ENCODE measurements at regions of chr7 and their contacts with region 1.

Region 1: GRCh38 chr7:33109005-33109757 is at the start of gene RP9:
- DNase-seq: peak; percentile 60
- H3K4me3 ChIP-seq: peak within 1 kb of the TSS; percentile 73 to 95 (median 85)
- H3K27ac ChIP-seq: peak within 1 kb of the TSS; percentile 66
- H3K4me1 ChIP-seq: peaks cover 18% of the 10 kb centered on the region
- H3K27me3 ChIP-seq: no peaks in the 10 kb centered on the region
- CTCF ChIP-seq: peak in 1 of 2 donors; percentile 49
- total RNA-seq, gene RP9: 7.2 to 17.1 TPM

Region 2: GRCh38 chr7:32694182-32694581 is 415.0 kb before region 1 on chr7:
- CTCF ChIA-PET with region 1: no interaction called
- dilution Hi-C with region 1: no loop called
- in situ Hi-C with region 1: no loop called
- intact Hi-C with region 1: loop called (anchors 10 kb)
- DNase-seq: no peak
- H3K4me3 ChIP-seq: no peak overlapping the region
- H3K27ac ChIP-seq: no peak overlapping the region
- H3K4me1 ChIP-seq: no peaks in the 10 kb centered on the region
- H3K27me3 ChIP-seq: no peaks in the 10 kb centered on the region
- CTCF ChIP-seq: no peak

Region 3: DNA sequence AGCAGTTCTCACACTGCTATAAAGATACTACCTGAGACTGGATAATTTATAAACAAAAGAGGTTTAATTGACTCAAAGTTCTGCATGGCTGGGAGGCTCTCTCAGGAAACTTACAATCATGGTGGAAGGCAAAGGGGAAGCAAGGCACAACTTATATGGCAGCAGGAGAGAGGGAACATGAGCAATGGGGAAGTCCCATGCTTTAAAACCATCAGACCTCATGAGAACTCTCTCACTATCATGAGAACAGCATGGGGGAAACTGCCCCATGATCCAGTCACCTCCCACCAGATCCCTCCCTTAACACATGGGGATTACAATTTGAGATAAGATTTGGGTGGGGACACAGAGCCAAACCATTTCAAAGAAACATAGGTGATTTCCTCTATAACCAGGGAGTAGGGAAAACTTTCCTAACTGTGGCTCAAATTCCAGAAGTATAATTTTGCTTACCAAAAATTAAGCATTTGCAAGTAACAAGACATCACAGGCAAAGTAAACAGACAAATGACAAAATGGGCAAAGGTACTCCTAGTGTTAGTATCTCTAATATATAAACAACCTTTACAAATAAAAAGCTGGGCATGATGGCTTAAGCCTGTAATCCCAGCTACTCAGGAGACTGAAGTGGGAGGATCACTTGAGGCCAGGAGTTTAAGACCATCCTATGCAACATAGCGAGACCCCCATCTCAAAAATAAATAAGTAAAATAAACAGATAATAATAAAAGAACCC is 305.6 kb before region 1 on chr7:
- CTCF ChIA-PET with region 1: interaction called, 5 read pairs
- dilution Hi-C with region 1: no loop called
- in situ Hi-C with region 1: no loop called
- intact Hi-C with region 1: loop called (anchors 1 kb)
- DNase-seq: no peak
- H3K4me3 ChIP-seq: no peak overlapping the region
- H3K27ac ChIP-seq: no peak overlapping the region
- H3K4me1 ChIP-seq: no peaks in the 10 kb centered on the region
- H3K27me3 ChIP-seq: no peaks in the 10 kb centered on the region
- CTCF ChIP-seq: no peak

Region 4: GRCh38 chr7:32942786-32943653 is 166.2 kb before region 1 on chr7:
- CTCF ChIA-PET with region 1: no interaction called
- dilution Hi-C with region 1: no loop called
- in situ Hi-C with region 1: no loop called
- intact Hi-C with region 1: loop called (anchors 5 kb)
- DNase-seq: peak; percentile 74
- H3K4me3 ChIP-seq: peak overlapping the region; percentile 60 to 69 (median 64)
- H3K27ac ChIP-seq: peak overlapping the region; percentile 67
- H3K4me1 ChIP-seq: peaks cover 3% of the 10 kb centered on the region
- H3K27me3 ChIP-seq: no peaks in the 10 kb centered on the region
- CTCF ChIP-seq: peak; percentile 20 to 63

Region 5: GRCh38 chr7:33062782-33063443 is 46.3 kb before region 1 on chr7:
- CTCF ChIA-PET with region 1: no interaction called
- dilution Hi-C with region 1: no loop called
- in situ Hi-C with region 1: no loop called
- intact Hi-C with region 1: loop called (anchors 2 kb)
- DNase-seq: peak; percentile 94
- H3K4me3 ChIP-seq: peak overlapping the region; percentile 62 to 95 (median 84)
- H3K27ac ChIP-seq: peak overlapping the region; percentile 73
- H3K4me1 ChIP-seq: peaks cover 5% of the 10 kb centered on the region
- H3K27me3 ChIP-seq: no peaks in the 10 kb centered on the region
- CTCF ChIP-seq: no peak

Region 6: DNA sequence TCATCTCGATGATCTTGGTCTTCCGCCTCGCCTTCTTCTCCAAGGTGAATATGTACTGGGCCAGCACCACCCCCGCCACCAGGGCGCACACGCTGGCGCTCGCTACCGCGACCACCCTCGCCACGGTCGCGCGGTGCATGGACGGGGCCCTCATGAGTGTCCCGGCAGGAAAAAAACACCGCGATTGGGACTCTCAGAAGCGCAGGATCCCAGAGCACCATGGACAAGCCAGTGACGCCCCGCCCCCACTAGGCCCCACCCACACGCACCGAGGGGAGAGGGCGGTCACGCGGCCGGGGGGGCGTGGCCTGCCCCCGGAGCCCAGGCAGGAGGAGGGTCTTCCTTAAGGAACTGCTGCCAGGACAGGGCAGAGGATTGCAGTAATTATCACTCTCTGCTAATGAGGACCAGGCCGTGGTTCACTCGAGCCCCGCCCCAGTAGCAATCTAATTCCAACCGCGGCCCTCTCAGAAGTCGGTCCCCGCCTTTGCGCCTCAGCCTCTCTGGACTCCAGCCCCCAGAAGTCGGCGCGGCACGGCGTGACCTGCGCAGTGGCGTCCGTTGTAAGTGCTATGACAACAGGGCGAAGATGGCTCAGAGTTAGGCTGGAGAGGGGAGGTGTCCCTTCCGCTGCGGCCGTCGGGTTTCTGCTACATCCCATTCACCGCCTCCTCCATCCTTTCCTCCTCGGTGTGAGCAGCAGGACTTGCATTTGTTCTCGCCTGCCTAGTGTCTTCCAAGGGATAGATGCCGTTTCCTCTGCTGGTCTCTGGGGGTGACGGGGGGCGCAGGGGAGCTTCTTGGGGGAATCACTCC is 20.0 kb after region 1 on chr7 and contains the start of gene BBS9:
- CTCF ChIA-PET with region 1: no interaction called
- dilution Hi-C with region 1: no loop called
- in situ Hi-C with region 1: no loop called
- intact Hi-C with region 1: loop called (anchors 1 kb)
- DNase-seq: peak; percentile 95
- H3K4me3 ChIP-seq: peak within 1 kb of the TSS; percentile 56 to 84 (median 80)
- H3K27ac ChIP-seq: peak within 1 kb of the TSS; percentile 40
- H3K4me1 ChIP-seq: peaks cover 5% of the 10 kb centered on the region
- H3K27me3 ChIP-seq: no peaks in the 10 kb centered on the region
- CTCF ChIP-seq: peak in 1 of 2 donors; percentile 12
- total RNA-seq, gene BBS9: 11.3 to 17.3 TPM

Region 7: DNA sequence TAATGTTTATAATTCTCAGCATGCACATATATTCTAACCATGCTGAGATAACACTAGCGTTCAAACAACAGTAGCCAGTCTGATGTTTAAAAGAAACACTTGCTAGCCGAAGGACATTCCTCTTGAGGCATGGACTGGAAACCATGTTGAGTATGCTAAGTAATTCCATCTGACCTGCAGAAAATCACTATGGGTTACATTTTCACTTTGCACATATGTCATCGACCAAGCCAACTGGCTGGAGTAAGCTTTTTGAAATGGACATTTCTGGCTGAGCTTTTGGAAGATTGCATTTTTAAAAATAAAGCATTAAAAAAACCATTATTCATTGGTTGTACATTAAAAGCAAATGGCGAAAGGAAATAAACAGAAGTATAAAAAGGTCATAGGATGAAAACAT is 108.4 kb after region 1 on chr7:
- CTCF ChIA-PET with region 1: no interaction called
- dilution Hi-C with region 1: no loop called
- in situ Hi-C with region 1: no loop called
- intact Hi-C with region 1: no loop called
- DNase-seq: no peak
- H3K4me3 ChIP-seq: no peak overlapping the region
- H3K27ac ChIP-seq: no peak overlapping the region
- H3K4me1 ChIP-seq: no peaks in the 10 kb centered on the region
- H3K27me3 ChIP-seq: no peaks in the 10 kb centered on the region
- CTCF ChIP-seq: no peak